ENCODE measurements at regions of chr11 and their contacts with region 1.

Region 1: DNA sequence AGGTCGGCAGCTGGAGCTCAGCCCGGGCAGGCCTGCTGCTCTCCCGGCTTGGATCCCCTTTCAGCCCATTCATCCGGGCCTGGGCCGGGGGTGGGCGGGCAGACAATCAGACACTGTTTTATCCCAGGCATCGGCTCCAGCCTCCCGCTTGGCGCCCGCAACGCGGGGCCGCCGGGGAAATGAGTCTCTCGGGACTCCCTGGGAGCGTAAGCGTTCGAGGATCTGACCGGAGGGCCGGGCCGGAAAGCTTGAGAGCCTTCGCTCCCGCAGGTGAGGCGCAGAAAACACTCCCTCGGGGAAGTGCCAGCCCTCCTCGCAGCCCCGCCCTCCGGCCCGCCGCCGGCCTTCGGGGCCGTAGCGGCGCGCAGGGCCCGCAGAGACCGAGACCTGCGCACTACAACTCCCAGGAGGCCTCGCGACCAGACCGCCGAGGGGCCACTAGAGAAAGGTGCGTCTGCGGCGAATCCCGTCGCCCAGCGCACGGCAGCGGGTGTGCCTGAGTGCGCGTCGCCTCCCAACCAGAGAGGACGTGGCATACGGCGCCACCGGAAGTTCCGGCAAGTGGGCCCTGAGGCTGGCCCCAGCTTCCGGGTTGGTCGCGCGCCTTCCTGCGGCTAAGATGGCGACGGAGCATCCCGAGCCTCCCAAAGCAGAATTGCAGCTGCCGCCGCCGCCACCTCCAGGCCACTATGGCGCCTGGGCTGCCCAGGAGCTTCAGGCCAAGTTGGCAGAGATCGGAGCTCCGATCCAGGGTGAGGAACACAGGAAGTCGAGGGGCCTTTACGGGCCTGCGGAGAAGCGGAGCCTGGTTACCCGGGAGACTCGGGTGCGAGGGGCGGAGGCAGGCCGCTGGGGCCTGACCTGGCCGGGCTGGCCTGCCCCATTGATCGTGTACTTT is at the start of gene SF3B2:
- DNase-seq: peak; percentile 99
- H3K4me3 ChIP-seq: peak within 1 kb of the TSS; percentile 83
- H3K27ac ChIP-seq: peak within 1 kb of the TSS; percentile 60
- H3K4me1 ChIP-seq: peaks cover 21% of the 10 kb centered on the region
- CTCF ChIP-seq: no peak
- total RNA-seq, gene SF3B2: 185 and 191 TPM in 2 replicates

Region 2: GRCh38 chr11:66063900-66064299 is 11.9 kb after region 1 on chr11:
- CTCF ChIA-PET with region 1: interaction called, 4 read pairs
- POLR2A ChIA-PET with region 1: interaction called, 20 read pairs
- intact Hi-C with region 1: no loop called
- DNase-seq: no peak
- H3K4me3 ChIP-seq: no peak overlapping the region
- H3K27ac ChIP-seq: no peak overlapping the region
- H3K4me1 ChIP-seq: peaks cover 9% of the 10 kb centered on the region
- CTCF ChIP-seq: no peak

Region 3: DNA sequence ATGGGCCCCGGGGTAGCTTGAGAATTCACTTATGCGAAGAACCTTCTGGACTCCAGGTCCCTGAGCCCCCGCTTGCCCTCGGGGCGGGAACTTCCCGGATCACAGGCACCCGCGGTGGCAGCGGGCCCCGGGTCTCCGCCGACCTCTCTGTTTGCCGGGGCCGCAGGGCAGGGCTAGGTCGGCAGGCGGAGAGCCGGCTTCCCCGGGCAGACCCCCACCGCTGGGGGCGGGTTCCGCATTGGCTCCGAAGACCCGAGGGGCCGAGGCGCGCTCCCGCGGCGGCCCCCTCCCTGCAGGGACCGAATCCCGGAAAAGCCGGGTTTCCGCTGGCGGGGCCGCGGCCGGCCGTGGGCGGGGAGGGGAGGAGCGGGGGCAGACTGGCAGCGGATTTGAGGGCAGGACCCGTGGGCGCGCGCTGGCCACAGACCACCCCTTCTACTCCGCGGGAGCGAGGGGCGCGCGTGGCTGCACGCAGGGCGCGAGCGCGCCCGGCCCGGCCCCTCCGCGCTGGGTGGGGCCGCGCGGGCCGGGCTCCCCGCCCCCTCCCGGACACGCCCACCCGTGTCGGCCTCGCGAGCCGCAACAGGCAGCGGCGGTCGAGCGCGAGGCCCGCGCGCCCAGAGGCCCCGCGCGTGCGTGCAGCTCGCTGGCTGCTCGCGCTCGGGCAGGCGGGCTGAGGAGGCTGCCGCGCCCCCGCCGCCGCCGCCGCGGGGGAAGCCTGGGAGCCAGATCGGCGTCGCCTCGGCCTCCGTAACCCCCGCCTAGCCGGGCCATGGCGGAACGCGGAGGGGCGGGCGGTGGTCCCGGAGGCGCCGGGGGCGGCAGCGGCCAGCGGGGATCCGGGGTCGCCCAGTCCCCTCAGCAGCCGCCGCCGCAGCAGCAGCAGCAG is 17.9 kb after region 1 on chr11 and contains the start of gene PACS1:
- CTCF ChIA-PET with region 1: interaction called, 4 read pairs
- POLR2A ChIA-PET with region 1: interaction called, 11 read pairs
- intact Hi-C with region 1: no loop called
- DNase-seq: peak; percentile 78
- H3K4me3 ChIP-seq: peak within 1 kb of the TSS; percentile 83
- H3K27ac ChIP-seq: peak within 1 kb of the TSS; percentile 73
- H3K4me1 ChIP-seq: peaks cover 50% of the 10 kb centered on the region
- CTCF ChIP-seq: peak; percentile 13; the same call in 1 of the 2 replicates
- total RNA-seq, gene PACS1: 21.2 and 23.7 TPM in 2 replicates

Measured in OCI-LY7 (cell line).